Colonic mucosa (tissue), 4 donors: ENCODE measurements at regions of chr18 and their contacts with region 1.

Region 1: GRCh38 chr18:40904295-40904694 is 1050.7 kb upstream of the PIK3C3 start:
- DNase-seq: no peak
- H3K4me3 ChIP-seq: no peak overlapping the region
- H3K27ac ChIP-seq: no peak overlapping the region
- H3K4me1 ChIP-seq: no peaks in the 10 kb centered on the region
- H3K27me3 ChIP-seq: no peaks in the 10 kb centered on the region
- CTCF ChIP-seq: no peak

Region 2: DNA sequence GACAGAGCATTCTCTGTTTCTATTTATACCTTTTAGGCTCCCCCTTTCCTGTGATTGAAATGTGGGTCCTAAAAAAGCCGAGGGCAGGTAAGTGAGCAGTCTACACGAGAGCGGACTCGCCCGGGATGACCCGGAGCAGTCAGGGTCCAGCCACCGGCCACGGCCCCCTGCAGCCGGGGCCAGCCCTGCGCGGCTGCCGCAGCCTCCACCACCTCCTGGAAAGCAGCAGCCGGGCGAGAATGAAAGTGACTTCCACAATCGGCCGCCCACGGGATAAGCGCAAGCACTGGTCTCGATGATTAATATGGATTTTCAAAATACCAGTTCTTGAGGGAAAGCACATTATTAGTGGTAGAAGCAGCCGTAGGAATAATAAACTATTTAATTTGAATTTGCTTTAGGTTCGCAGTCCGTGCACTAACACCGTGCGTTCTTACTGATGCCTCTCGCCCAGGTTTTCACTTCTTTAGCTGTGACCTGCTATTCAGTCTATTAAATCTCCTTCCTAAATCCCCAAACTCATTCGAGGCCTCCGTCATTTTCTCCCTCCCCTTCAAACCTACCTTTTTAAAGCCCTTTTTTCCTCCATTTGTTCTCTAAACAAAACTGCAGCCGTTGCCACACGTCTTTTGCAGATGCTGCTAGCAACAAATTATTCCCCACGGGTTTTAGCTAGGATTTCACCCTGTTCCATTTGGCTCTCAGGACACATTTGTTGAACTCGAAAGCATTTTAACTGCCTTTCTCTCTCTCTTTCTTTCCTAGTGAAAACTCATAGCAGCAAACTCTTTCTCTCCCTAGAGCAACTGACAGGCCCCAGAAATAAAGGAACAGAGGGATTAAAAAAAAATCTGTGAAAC is 35.6 kb after region 1 on chr18:
- intact Hi-C with region 1: no loop called
- DNase-seq: no peak
- H3K4me3 ChIP-seq: no peak overlapping the region
- H3K27ac ChIP-seq: no peak overlapping the region
- H3K4me1 ChIP-seq: no peaks in the 10 kb centered on the region
- H3K27me3 ChIP-seq: no peaks in the 10 kb centered on the region
- CTCF ChIP-seq: no peak

Region 3: GRCh38 chr18:40957533-40958070 is 53.3 kb after region 1 on chr18:
- intact Hi-C with region 1: loop called (anchors 10 kb)
- DNase-seq: no peak
- H3K4me3 ChIP-seq: no peak overlapping the region
- H3K27ac ChIP-seq: no peak overlapping the region
- H3K4me1 ChIP-seq: no peaks in the 10 kb centered on the region
- H3K27me3 ChIP-seq: no peaks in the 10 kb centered on the region
- CTCF ChIP-seq: no peak